ENCODE measurements at regions of chr12 and their contacts with region 1.

Region 1: GRCh38 chr12:57520053-57520871 is at the start of gene DDIT3:
- DNase-seq: peak; percentile 97
- H3K4me3 ChIP-seq: peak within 1 kb of the TSS; percentile 57 to 83 (median 78)
- H3K27ac ChIP-seq: peak within 1 kb of the TSS; percentile 89
- H3K4me1 ChIP-seq: peaks cover 55% of the 10 kb centered on the region
- H3K27me3 ChIP-seq: no peaks in the 10 kb centered on the region
- CTCF ChIP-seq: no peak
- total RNA-seq, gene DDIT3: 28.3 to 66.1 TPM

Region 2: DNA sequence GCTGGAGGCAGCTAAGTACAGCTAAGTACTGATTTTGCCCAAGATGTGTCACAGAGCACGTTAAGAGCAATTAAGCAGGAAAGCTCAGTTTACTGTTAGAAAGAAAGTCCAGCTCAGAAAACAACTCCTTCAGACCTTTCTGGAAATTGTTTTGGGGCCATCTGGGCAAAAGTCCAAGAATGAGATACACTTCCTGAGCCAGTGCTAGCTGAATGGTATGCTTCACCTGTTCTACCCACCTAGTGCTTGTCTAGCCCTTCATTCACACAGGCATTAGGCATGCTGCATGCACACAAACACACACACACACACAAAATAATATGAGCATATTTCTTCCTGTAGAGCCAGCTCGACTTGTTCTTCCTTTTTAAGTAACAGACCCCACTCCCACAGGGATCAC is 1506.1 kb before region 1 on chr12:
- CTCF ChIA-PET with region 1: no interaction called
- dilution Hi-C with region 1: no loop called
- in situ Hi-C with region 1: no loop called
- intact Hi-C with region 1: no loop called
- DNase-seq: no peak
- H3K4me3 ChIP-seq: no peak overlapping the region
- H3K27ac ChIP-seq: no peak overlapping the region
- H3K4me1 ChIP-seq: no peaks in the 10 kb centered on the region
- H3K27me3 ChIP-seq: no peaks in the 10 kb centered on the region
- CTCF ChIP-seq: no peak

Region 3: DNA sequence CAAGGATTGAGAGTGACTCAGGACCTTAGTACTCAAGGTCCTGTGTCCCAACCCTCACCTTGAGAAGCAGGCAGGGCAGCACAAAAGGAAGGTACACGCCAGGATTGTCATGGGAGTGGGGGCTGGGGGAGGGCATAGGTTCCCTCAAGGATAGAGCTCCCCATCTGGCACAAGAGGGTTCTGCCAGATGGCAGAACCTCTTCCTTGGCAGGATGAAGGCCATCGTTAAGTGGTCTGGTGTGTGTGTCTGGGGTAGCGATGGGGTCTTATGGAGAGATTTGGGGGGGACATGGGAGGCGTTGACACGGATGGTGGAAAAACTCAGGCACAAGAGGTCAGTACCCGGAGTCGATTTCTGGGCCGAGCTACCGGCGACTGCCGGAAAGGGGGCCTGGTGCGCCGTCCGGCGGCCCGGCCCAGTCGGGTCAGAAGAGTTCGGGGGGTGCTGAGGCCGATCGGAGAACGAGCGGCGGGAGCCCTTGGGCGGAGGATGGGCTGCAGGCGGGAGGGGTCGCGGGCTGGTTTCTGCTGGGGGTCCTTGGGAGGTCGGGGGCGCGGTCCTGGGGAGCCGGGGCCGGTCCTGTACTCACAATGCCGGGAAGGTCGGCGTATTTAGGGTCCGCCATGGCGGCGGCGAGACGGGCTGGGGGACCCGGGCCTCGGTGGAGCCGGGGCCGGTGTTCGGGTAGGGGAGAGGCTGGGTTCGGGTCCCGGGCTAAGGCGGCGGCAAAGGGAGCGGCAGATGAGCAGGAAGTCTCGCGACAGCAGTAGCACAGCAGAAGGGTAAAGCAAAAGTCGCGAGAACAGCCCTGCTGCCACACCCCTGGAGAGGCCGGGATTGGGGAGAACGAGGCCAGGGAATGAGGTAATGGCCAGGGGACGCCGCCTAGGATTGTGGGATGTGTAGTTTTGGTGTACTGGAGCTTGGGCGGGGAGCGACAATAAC is 26.4 kb after region 1 on chr12 and contains the start of gene DCTN2:
- CTCF ChIA-PET with region 1: no interaction called
- dilution Hi-C with region 1: no loop called
- in situ Hi-C with region 1: no loop called
- intact Hi-C with region 1: loop called (anchors 1 kb)
- DNase-seq: peak; percentile 95
- H3K4me3 ChIP-seq: peak within 1 kb of the TSS; percentile 76 to 84 (median 80)
- H3K27ac ChIP-seq: peak within 1 kb of the TSS; percentile 85
- H3K4me1 ChIP-seq: peaks cover 17% of the 10 kb centered on the region
- H3K27me3 ChIP-seq: no peaks in the 10 kb centered on the region
- CTCF ChIP-seq: peak in 1 of 2 donors; percentile 42
- total RNA-seq, gene DCTN2: 140 to 153 TPM

Region 4: GRCh38 chr12:57735952-57736740 is 215.9 kb after region 1 on chr12:
- CTCF ChIA-PET with region 1: no interaction called
- dilution Hi-C with region 1: no loop called
- in situ Hi-C with region 1: no loop called
- intact Hi-C with region 1: loop called (anchors 5 kb)
- DNase-seq: peak; percentile 37
- H3K4me3 ChIP-seq: peak overlapping the region; percentile 9 to 27 (median 11)
- H3K27ac ChIP-seq: no peak overlapping the region
- H3K4me1 ChIP-seq: peaks cover 24% of the 10 kb centered on the region
- H3K27me3 ChIP-seq: peaks cover 22% of the 10 kb centered on the region
- CTCF ChIP-seq: peak; percentile 26 to 46

Measured in mammary epithelial cell (primary cell).